Activated B cell treated with CpG ODN at 0.5 μM for 24 hours (primary cell): ENCODE measurements at regions of chr15 and their contacts with region 1.

Region 1: DNA sequence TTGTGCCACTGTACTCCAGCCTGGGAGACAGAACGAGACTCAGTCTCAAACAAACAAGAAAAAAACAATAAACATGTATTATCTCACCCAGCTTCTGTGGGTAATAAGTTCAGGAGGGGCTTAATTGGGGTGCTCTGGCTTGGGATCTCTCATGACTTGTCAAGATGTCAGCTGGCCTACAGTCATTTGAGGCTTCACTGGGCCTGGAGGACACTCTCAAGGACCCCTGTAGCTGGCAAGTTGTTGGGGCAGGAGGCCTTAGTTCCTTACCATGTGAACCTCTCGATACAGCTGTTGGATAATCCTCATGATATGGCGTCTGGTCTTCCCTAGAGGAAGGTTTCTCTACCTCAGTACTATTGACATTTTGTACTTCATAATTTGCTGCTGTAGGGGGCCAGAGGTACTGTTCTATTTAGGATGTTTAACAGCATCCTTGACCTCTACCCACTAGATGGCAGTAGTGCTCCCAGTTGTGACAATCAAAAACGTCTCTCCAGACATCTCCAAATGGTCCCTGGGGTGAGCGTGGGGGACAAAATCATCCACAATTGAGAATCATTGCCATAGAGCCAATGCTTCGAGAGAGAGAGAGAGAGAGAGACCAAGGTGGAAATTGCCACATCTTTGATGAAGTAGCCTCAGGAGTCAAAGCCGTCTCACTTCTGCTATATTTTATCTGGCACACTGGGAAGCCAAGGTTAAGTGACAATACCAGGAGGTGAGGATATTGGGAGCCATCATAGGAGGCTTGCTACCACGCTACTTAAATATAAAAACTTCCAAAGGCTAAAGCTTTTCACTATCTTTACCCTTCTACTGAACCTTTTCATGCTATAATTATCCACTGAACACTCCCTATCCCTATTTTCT is 23.9 kb upstream of the SLTM start:
- DNase-seq: peak; percentile 17
- ATAC-seq: peak; percentile 97
- H3K4me3 Mint-ChIP-seq: no peak overlapping the region
- H3K27ac Mint-ChIP-seq: peak overlapping the region; percentile 38
- H3K4me1 Mint-ChIP-seq: peaks cover 5% of the 10 kb centered on the region
- H3K27me3 Mint-ChIP-seq: no peaks in the 10 kb centered on the region
- CTCF ChIP-seq: no peak

Region 2: GRCh38 chr15:58987489-58988005 is 30.2 kb after region 1 on chr15 and contains the start of gene RNF111:
- CTCF ChIA-PET with region 1: no interaction called
- POLR2A ChIA-PET with region 1: no interaction called
- intact Hi-C with region 1: loop called (anchors 1 kb)
- DNase-seq: peak; percentile 78
- ATAC-seq: peak; percentile 91
- H3K4me3 Mint-ChIP-seq: peak within 1 kb of the TSS; percentile 95
- H3K27ac Mint-ChIP-seq: peak within 1 kb of the TSS; percentile 94
- H3K4me1 Mint-ChIP-seq: peaks cover 45% of the 10 kb centered on the region
- H3K27me3 Mint-ChIP-seq: no peaks in the 10 kb centered on the region
- CTCF ChIP-seq: no peak
- total RNA-seq, gene RNF111: 52.5 and 55.8 TPM in 2 replicates

Region 3: GRCh38 chr15:59020322-59020721 is 63.0 kb after region 1 on chr15:
- CTCF ChIA-PET with region 1: no interaction called
- POLR2A ChIA-PET with region 1: no interaction called
- intact Hi-C with region 1: no loop called
- DNase-seq: no peak
- ATAC-seq: no peak
- H3K4me3 Mint-ChIP-seq: no peak overlapping the region
- H3K27ac Mint-ChIP-seq: no peak overlapping the region
- H3K4me1 Mint-ChIP-seq: peaks cover 15% of the 10 kb centered on the region
- H3K27me3 Mint-ChIP-seq: no peaks in the 10 kb centered on the region
- CTCF ChIP-seq: no peak

Region 4: DNA sequence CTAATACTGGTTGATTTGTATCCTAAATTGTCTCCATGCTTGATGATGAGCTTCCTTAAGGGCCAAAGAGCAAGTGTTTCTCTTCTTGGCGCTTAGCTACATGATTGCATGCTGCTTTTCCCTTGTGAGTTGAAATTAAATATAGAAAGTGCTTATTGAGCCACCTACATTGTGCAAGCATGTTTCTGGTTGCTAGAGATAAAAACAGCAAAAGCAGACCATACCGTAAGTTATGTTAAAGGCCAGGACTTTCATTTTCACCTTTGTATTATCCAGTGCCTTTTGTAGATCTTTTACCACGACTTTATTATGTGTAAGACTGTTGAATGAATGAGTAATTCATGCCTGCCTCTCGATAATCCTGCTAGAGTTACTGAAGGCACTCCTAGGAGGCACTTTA is 105.7 kb after region 1 on chr15:
- CTCF ChIA-PET with region 1: interaction called, 3 read pairs
- POLR2A ChIA-PET with region 1: interaction called, 6 read pairs
- intact Hi-C with region 1: loop called (anchors 5 kb)
- DNase-seq: no peak
- ATAC-seq: no peak
- H3K4me3 Mint-ChIP-seq: no peak overlapping the region
- H3K27ac Mint-ChIP-seq: no peak overlapping the region
- H3K4me1 Mint-ChIP-seq: peaks cover 18% of the 10 kb centered on the region
- H3K27me3 Mint-ChIP-seq: no peaks in the 10 kb centered on the region
- CTCF ChIP-seq: no peak

Region 5: DNA sequence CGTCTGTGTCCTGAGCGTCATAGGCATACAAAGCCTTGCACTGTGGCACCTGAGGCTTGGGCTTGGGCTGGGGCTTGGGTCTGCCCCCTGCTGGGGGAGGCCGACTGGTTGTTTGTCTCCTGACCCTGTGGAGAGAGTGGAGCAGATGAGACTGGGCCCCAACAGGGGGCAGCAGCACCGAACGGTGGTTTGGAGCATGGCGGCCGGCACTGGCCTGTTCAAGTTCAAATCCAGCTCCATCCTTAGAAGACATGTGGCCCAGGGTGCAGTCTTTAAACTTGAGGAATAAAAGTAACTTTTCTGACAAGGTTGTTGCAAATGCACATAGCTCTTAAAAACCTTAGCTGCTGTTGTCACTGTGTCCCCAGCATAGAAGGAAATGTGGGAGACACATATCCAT is 180.9 kb after region 1 on chr15:
- CTCF ChIA-PET with region 1: interaction called, 8 read pairs
- POLR2A ChIA-PET with region 1: no interaction called
- intact Hi-C with region 1: loop called (anchors 1 kb)
- DNase-seq: peak; percentile 51
- ATAC-seq: peak; percentile 96
- H3K4me3 Mint-ChIP-seq: no peak overlapping the region
- H3K27ac Mint-ChIP-seq: peak overlapping the region; percentile 13
- H3K4me1 Mint-ChIP-seq: peaks cover 10% of the 10 kb centered on the region
- H3K27me3 Mint-ChIP-seq: no peaks in the 10 kb centered on the region
- CTCF ChIP-seq: no peak

Region 6: GRCh38 chr15:59174835-59175831 is 217.8 kb after region 1 on chr15:
- CTCF ChIA-PET with region 1: no interaction called
- POLR2A ChIA-PET with region 1: no interaction called
- intact Hi-C with region 1: loop called (anchors 1 kb)
- DNase-seq: no peak
- ATAC-seq: peak; percentile 99
- H3K4me3 Mint-ChIP-seq: no peak overlapping the region
- H3K27ac Mint-ChIP-seq: peak overlapping the region; percentile 20
- H3K4me1 Mint-ChIP-seq: peaks cover 15% of the 10 kb centered on the region
- H3K27me3 Mint-ChIP-seq: no peaks in the 10 kb centered on the region
- CTCF ChIP-seq: no peak

Region 7: DNA sequence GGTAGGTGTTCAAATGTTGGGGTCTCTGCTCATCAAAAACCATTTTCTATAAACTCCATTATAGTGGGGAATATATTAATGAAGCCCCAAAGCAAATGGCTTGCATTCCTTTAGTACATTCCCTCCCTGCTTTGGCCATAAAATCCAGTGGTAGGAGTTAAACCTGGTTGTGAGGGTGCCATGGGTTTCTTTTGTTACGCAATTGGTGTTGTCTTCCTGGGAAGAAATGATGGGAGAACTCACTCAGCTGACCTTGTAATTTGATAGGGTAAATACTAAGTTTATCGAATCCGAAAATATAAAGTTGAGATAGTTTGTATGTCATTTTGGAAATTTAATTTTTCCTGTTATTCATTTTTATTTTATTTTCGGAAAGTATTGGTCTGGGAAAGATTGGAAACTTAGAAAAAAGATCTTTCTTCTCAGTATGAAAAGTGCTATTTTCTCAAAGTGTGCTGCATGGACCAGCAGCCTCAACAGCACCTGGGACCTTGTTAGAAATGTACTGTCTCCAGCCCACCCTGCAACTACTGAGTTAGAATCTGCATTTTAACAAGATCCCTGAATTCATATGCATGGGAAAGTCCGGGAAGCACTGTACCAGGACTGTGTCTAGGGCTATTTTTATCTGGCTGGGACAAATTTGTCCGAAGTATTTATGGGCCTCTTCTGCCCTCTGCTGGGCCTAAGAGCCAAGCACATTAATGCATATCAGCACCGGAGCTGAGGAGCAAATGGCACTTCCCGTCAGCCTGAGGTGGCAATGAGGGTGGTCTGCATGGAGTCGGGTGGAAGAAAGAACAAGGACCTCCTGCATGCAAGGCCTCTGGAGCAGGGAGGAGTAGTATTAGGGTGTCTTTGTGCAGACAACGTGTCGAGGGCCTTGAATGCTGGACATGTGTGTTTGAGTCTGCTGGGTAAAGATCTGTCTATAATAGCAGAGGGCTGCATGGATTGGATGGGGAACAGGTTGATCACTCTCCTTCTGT is 535.3 kb after region 1 on chr15:
- CTCF ChIA-PET with region 1: interaction called, 8 read pairs
- POLR2A ChIA-PET with region 1: no interaction called
- intact Hi-C with region 1: loop called (anchors 1 kb)
- DNase-seq: peak; percentile 31
- ATAC-seq: peak; percentile 93
- H3K4me3 Mint-ChIP-seq: no peak overlapping the region
- H3K27ac Mint-ChIP-seq: peak overlapping the region; percentile 1
- H3K4me1 Mint-ChIP-seq: peaks cover 10% of the 10 kb centered on the region
- H3K27me3 Mint-ChIP-seq: no peaks in the 10 kb centered on the region
- CTCF ChIP-seq: peak; percentile 87

Region 8: GRCh38 chr15:59501597-59501996 is 544.3 kb after region 1 on chr15:
- CTCF ChIA-PET with region 1: interaction called, 10 read pairs
- POLR2A ChIA-PET with region 1: no interaction called
- intact Hi-C with region 1: loop called (anchors 1 kb)
- DNase-seq: no peak
- ATAC-seq: peak; percentile 67
- H3K4me3 Mint-ChIP-seq: no peak overlapping the region
- H3K27ac Mint-ChIP-seq: no peak overlapping the region
- H3K4me1 Mint-ChIP-seq: no peaks in the 10 kb centered on the region
- H3K27me3 Mint-ChIP-seq: no peaks in the 10 kb centered on the region
- CTCF ChIP-seq: peak; percentile 24